HCT116 (cell line): ENCODE measurements at regions of chr1 and their contacts with region 1.

Region 1: GRCh38 chr1:147850759-147851508 is 51.7 kb upstream of the GJA8 start:
- DNase-seq: no peak
- ATAC-seq: no peak
- H3K4me3 ChIP-seq: no peak overlapping the region
- H3K27ac ChIP-seq: no peak overlapping the region
- H3K4me1 ChIP-seq: peaks cover 0 to 6% of the 10 kb centered on the region in 2 experiments; a peak in 2 of 4 replicates
- H3K27me3 ChIP-seq: no peaks in the 10 kb centered on the region
- CTCF ChIP-seq: no peak
- POLR2A ChIP-seq: no peak
- RAD21 ChIP-seq: no peak

Region 2: DNA sequence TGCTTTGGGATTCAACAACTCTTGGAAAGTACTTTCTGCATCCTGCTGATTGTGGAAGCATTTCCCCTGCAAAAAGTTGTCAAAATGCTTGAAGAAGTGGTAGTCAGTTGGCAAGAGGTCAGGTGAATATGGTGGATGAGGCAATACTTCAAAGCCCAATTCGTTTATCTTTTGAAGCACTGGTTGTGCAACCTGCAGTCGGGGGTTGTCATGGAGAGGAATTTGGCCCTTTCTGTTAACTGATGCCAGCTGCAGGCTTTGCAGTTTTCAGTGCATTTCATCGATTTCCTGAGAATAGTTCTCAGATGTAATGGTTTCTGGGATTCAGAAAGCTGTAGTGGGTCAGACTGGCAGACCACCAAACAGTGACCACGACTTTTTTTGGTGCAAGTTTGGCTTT is 42.9 kb before region 1 on chr1:
- CTCF ChIA-PET with region 1: no interaction called
- POLR2A ChIA-PET with region 1: no interaction called
- RAD21 ChIA-PET with region 1: no interaction called
- intact Hi-C with region 1: loop called (anchors 5 kb)
- DNase-seq: no peak
- ATAC-seq: no peak
- H3K4me3 ChIP-seq: no peak overlapping the region
- H3K27ac ChIP-seq: no peak overlapping the region
- H3K4me1 ChIP-seq: no peaks in the 10 kb centered on the region
- H3K27me3 ChIP-seq: no peaks in the 10 kb centered on the region
- CTCF ChIP-seq: no peak
- POLR2A ChIP-seq: no peak
- RAD21 ChIP-seq: no peak

Region 3: DNA sequence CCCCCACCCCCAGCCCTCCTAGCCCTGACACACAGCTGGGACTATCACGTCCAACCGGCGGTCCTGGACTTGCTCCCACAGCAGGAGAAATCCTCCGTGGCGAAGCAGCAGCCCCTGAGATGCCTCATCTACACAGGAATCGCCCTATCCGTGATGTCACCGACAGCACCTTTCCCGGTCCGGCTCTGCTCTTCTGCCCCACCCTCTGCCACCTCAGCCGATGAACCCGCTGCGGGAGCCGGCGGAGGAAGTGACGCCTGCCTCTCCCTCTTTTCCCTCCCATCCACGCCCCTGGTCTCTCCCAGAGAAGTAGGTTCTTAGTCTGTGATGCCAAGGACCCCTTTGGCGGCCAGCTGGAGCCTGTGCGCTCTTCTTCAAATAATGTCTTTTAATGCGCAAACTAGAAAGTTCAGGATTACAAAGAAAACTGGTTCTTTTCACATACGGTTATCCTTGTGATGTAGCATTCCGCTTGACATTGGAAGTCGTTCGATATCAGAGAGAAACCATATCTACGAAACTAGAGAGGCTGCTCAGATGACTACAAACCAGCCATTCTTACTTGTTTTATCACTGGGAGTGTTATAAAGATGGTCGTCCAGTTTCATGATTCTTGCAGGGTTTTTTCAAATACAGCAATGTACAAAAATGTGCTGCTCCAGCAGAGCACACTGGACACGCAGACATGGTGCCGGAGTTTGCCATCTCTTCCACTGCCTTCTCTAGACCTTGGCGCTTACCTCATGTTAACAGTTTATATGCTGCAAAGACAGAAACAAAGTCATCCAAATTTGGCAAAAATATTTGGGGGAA is 511.9 kb after region 1 on chr1:
- CTCF ChIA-PET with region 1: no interaction called
- POLR2A ChIA-PET with region 1: no interaction called
- RAD21 ChIA-PET with region 1: no interaction called
- intact Hi-C with region 1: no loop called
- DNase-seq: peak; percentile 86
- ATAC-seq: peak; percentile 92
- H3K4me3 ChIP-seq: peak overlapping the region; percentile 40 to 54
- H3K27ac ChIP-seq: no peak overlapping the region
- H3K4me1 ChIP-seq: peaks cover 9 to 50% of the 10 kb centered on the region in 2 experiments
- H3K27me3 ChIP-seq: no peaks in the 10 kb centered on the region
- CTCF ChIP-seq: no peak
- POLR2A ChIP-seq: no peak
- RAD21 ChIP-seq: no peak